ENCODE measurements at regions of chr20 and their contacts with region 1.

Region 1: GRCh38 chr20:17666481-17666880 is 15.6 kb downstream of the RRBP1 start:
- DNase-seq: no peak
- H3K4me3 ChIP-seq: no peak overlapping the region
- H3K27ac ChIP-seq: no peak overlapping the region
- H3K4me1 ChIP-seq: peaks cover 2 to 3% (median 2%) of the 10 kb centered on the region in 4 experiments; a peak in 3 of 7 replicates
- H3K27me3 ChIP-seq: no peaks in the 10 kb centered on the region
- CTCF ChIP-seq: no peak
- EP300 ChIP-seq: no peak
- POLR2A ChIP-seq: no peak
- RAD21 ChIP-seq: no peak

Region 2: GRCh38 chr20:17587824-17588223 is 78.7 kb before region 1 on chr20:
- CTCF ChIA-PET with region 1: no interaction called
- POLR2A ChIA-PET with region 1: no interaction called
- DNase-seq: no peak
- H3K4me3 ChIP-seq: no peak overlapping the region
- H3K27ac ChIP-seq: no peak overlapping the region
- H3K4me1 ChIP-seq: peaks cover 0 to 2% (median under 1%) of the 10 kb centered on the region in 4 experiments; a peak in 2 of 7 replicates
- H3K27me3 ChIP-seq: no peaks in the 10 kb centered on the region
- CTCF ChIP-seq: no peak
- EP300 ChIP-seq: no peak
- POLR2A ChIP-seq: no peak
- RAD21 ChIP-seq: no peak

Region 3: DNA sequence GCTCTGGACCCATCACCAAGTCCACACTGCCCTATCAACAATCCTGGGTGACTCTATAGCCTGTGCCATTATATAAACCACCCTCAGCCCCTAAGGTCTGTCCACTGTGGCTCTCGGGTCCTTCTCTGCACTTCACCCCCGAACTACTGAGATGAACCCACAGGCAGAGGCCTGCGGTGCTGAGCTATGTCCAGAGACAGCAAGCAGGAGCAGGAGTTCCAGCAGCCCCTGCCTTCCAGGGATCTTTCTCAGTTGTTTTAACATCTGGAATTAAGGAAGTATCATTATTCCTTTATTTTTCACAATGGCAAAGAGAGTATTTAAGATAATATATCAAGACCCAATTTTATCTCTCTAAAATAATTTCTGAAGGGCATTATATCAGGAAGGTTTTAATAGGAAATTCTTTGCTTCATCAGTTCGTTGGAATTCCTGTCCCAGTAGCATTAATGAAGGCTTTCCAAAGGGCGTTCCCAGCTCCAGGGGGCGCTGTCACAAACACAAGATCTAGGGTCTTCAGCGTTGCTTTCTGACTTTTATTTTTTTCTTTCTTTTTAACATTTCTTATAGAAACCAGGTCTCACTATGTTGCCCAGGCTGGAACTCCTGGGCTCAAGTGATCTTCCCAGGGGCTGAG is 11.7 kb before region 1 on chr20:
- CTCF ChIA-PET with region 1: interaction called, 26 read pairs
- POLR2A ChIA-PET with region 1: interaction called, 5 read pairs
- DNase-seq: peak in 1 of 2 experiments; percentile 85
- H3K4me3 ChIP-seq: no peak overlapping the region
- H3K27ac ChIP-seq: no peak overlapping the region
- H3K4me1 ChIP-seq: peaks cover 6 to 9% (median 8%) of the 10 kb centered on the region in 4 experiments; a peak in 5 of 7 replicates
- H3K27me3 ChIP-seq: no peaks in the 10 kb centered on the region
- CTCF ChIP-seq: peak; percentile 55 to 72 (median 58); a peak in 3 of 4 replicates
- EP300 ChIP-seq: no peak
- POLR2A ChIP-seq: no peak
- RAD21 ChIP-seq: peak; percentile 23 to 52; a peak in 2 of 4 replicates

Region 4: GRCh38 chr20:17676942-17677341 is 10.5 kb after region 1 on chr20:
- CTCF ChIA-PET with region 1: interaction called, 11 read pairs
- POLR2A ChIA-PET with region 1: interaction called, 21 read pairs
- DNase-seq: no peak
- H3K4me3 ChIP-seq: no peak overlapping the region
- H3K27ac ChIP-seq: no peak overlapping the region
- H3K4me1 ChIP-seq: peaks cover 4 to 12% (median 8%) of the 10 kb centered on the region in 4 experiments
- H3K27me3 ChIP-seq: no peaks in the 10 kb centered on the region
- CTCF ChIP-seq: no peak
- EP300 ChIP-seq: no peak
- POLR2A ChIP-seq: no peak
- RAD21 ChIP-seq: no peak

Measured in H1 (cell line).